ENCODE measurements at regions of chr2 and their contacts with region 1.

Region 1: GRCh38 chr2:9142551-9143263 is 63.9 kb upstream of the ASAP2 start:
- DNase-seq: peak; percentile 93
- ATAC-seq: peak; percentile 88 to 94
- H3K4me3 ChIP-seq: peak overlapping the region; percentile 42
- H3K27ac ChIP-seq: peak overlapping the region; percentile 79 to 83
- H3K4me1 ChIP-seq: peaks cover 30% of the 10 kb centered on the region
- CTCF ChIP-seq: peak; percentile 99
- EP300 ChIP-seq: no peak
- POLR2A ChIP-seq: no peak
- RAD21 ChIP-seq: peak; percentile 100

Region 2: GRCh38 chr2:8821276-8822217 is 321.2 kb before region 1 on chr2:
- CTCF ChIA-PET with region 1: no interaction called
- POLR2A ChIA-PET with region 1: no interaction called
- DNase-seq: no peak
- ATAC-seq: peak; percentile 55 to 59; a peak in 4 of 6 replicates
- H3K4me3 ChIP-seq: no peak overlapping the region
- H3K27ac ChIP-seq: no peak overlapping the region
- H3K4me1 ChIP-seq: peaks cover 16% of the 10 kb centered on the region; the same call in 2 of the 3 replicates
- CTCF ChIP-seq: no peak
- EP300 ChIP-seq: no peak
- POLR2A ChIP-seq: no peak
- RAD21 ChIP-seq: no peak

Region 3: DNA sequence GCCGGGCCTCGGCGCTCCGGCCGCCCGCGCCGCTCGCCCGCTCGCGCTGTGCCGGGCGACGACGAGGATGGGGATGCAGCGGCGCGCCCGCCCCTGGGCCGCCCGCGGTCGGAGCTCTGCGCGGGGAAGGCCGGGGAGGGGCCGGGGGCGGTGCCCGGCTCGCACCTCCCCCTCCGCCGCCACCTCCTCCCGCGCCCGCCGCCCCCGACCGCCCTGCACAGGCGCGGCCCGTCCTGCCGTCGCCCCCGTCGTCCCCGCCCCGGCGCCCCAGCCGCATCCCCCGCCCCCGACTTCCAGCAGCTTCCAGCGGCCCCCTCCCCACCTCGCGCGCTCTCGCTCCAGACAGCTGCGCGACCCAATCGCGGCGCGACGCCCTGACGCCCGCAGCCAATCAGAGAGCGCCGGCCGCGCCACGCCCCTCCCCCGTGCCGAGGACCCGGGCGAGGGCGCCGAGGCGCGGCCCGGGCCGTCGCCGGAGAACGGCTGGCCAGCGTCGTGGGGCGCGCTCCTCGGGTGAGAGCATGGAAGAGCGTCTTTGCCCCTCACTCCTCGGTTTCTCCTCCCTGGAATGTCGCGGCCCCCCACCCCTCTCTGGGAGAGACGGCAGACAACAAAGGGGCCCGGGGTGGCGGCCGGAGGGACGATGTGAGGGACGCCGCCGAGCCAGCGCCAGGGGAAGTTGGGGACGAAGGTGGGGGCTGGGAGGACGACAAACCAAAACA is 138.9 kb before region 1 on chr2 and contains the start of gene MBOAT2:
- CTCF ChIA-PET with region 1: interaction called, 10 read pairs
- POLR2A ChIA-PET with region 1: no interaction called
- DNase-seq: peak; percentile 92 to 96
- ATAC-seq: peak; percentile 88 to 94
- H3K4me3 ChIP-seq: peak within 1 kb of the TSS; percentile 94
- H3K27ac ChIP-seq: peak within 1 kb of the TSS; percentile 91 to 97
- H3K4me1 ChIP-seq: peaks cover 37% of the 10 kb centered on the region; the same call in 2 of the 3 replicates
- CTCF ChIP-seq: no peak
- EP300 ChIP-seq: no peak
- POLR2A ChIP-seq: peak; percentile 97
- RAD21 ChIP-seq: no peak
- polyA plus RNA-seq, gene MBOAT2: 32.3 and 33.3 TPM in 2 replicates

Region 4: DNA sequence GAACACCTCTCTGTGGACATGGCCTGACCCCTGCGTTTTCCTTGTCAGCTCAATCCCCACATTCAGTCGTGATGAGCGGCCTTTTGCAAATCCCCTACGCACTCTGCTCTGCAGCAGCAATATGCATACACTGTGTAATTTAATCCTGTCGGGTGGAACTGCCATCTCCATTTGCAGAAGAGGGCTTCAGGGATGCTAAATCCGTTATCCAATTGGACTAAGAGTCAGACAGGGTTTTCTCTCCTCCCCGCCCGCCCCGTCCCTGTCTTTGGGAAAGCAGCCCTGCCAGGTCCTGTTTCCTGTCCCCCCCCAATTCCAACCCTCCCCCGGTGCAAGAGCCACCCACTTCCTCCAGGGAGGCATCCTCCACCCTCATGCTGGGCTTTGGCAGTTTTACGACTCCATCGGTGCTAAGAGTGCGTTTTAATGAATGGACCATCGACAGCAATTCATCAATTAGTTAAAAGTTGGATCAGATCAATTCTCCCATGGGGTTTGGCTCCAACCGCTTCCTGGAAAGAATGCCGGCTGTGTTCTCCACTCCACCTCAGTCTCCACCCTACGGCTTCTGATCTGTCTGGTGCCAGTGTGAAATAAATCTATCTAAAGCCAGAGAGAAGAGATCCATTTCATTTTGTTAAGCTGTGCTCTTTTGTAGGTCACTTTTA is 10.4 kb after region 1 on chr2:
- CTCF ChIA-PET with region 1: interaction called, 82 read pairs
- POLR2A ChIA-PET with region 1: no interaction called
- DNase-seq: no peak
- ATAC-seq: no peak
- H3K4me3 ChIP-seq: no peak overlapping the region
- H3K27ac ChIP-seq: no peak overlapping the region
- H3K4me1 ChIP-seq: no peaks in the 10 kb centered on the region
- CTCF ChIP-seq: no peak
- EP300 ChIP-seq: no peak
- POLR2A ChIP-seq: no peak
- RAD21 ChIP-seq: no peak

Region 5: DNA sequence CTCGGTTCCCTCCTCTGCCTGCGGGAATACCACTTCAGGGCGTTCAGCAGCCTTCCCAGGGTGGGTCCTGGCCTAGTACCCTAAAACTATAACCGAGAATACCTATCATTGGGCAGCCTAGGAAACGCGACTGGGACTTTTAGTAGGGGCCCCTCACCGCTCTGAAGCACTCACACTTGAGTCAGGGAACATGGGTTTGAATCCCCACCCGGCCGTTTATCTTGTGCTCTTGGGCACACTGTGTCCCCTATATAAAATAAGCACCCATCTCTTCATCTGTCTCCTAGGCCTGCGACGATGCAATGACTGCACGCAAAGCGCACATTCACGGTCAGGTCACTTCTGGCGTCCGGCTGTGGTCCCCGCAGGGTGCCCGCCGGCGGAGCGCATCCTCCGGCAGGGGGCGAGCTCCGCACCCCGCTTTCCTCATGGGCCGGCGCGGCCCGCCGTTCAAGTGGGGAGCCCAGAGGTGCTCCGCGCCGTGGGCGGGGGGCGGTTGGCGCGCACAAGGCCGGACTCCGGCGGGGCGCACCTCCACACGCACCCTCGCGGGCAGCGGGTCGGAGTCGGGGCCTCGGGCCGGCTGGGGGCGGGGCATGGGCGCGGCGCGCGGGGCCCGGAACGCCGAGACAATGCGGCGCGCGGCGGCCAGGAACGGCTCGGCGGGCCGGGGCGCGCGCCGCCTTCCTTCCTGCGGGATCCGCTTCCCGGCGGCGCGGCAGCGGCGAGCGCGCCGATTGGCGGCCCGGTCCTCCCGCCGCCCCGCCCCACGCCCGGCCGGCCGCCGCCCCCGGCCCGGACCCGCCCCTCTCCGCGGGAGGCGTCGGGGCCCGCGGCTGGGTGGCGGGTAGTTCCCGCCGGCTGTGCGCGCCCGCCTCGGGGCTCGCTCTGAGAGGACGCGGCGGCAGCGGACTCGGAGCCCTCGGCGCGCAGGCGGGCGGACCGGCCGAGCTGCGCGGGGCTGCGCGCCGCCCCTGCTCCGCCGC is 63.5 kb after region 1 on chr2 and contains the start of gene ASAP2:
- CTCF ChIA-PET with region 1: interaction called, 55 read pairs
- POLR2A ChIA-PET with region 1: no interaction called
- DNase-seq: peak; percentile 76 to 90
- ATAC-seq: peak; percentile 76 to 80
- H3K4me3 ChIP-seq: peak within 1 kb of the TSS; percentile 93
- H3K27ac ChIP-seq: peak within 1 kb of the TSS; percentile 83 to 93
- H3K4me1 ChIP-seq: peaks cover 35% of the 10 kb centered on the region
- CTCF ChIP-seq: peak; percentile 97
- EP300 ChIP-seq: peak in 1 of 2 experiments; percentile 8; a peak in 2 of 5 replicates
- POLR2A ChIP-seq: peak; percentile 38; the same call in 1 of the 2 replicates
- RAD21 ChIP-seq: peak; percentile 65 to 89
- polyA plus RNA-seq, gene ASAP2: 27.9 TPM in 2 replicates

Region 6: DNA sequence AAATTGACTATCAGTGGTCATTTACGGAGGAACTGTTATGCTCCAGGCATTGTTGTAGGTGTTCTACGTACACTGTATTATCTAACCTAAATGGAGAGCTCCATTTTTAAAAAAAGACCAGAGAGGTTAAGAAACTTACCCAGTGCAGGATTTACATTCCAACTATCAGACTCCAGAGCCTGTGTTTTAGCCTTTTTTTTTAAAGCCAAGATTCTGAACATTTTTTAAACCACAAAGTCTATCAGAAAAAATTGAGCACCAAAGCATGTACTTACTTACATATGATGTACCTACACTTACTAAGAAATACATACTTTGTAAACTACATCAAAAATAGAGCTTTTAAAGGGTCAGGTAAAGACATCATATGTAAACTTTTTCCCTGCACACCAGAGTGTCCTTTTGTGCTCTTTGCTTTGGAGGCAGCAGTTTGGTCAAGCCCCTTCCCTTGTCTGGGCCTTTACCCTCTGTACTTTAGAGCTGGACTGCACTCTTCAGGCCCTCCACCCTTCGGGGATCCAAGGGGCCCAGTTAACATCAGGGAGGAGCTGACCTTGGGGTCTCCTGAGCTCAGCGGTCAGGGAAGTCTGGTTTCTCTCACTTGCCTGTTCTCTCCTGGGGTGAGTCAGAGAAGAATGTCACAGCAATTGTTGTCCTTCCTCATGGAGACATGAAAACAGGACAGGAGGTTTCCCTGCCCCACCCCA is 222.2 kb after region 1 on chr2:
- CTCF ChIA-PET with region 1: interaction called, 67 read pairs
- POLR2A ChIA-PET with region 1: no interaction called
- DNase-seq: no peak
- ATAC-seq: no peak
- H3K4me3 ChIP-seq: no peak overlapping the region
- H3K27ac ChIP-seq: no peak overlapping the region
- H3K4me1 ChIP-seq: no peaks in the 10 kb centered on the region
- CTCF ChIP-seq: no peak
- EP300 ChIP-seq: no peak
- POLR2A ChIP-seq: no peak
- RAD21 ChIP-seq: no peak

Region 7: GRCh38 chr2:9385841-9386240 is 243.1 kb after region 1 on chr2:
- CTCF ChIA-PET with region 1: interaction called, 18 read pairs
- POLR2A ChIA-PET with region 1: interaction called, 12 read pairs
- DNase-seq: no peak
- ATAC-seq: no peak
- H3K4me3 ChIP-seq: no peak overlapping the region
- H3K27ac ChIP-seq: peak overlapping the region; percentile 63 to 76
- H3K4me1 ChIP-seq: peaks cover 63% of the 10 kb centered on the region
- CTCF ChIP-seq: no peak
- EP300 ChIP-seq: no peak
- POLR2A ChIP-seq: no peak
- RAD21 ChIP-seq: no peak

Measured in A549 (cell line).